ENCODE measurements at regions of chr6 and their contacts with region 1.

Region 1: DNA sequence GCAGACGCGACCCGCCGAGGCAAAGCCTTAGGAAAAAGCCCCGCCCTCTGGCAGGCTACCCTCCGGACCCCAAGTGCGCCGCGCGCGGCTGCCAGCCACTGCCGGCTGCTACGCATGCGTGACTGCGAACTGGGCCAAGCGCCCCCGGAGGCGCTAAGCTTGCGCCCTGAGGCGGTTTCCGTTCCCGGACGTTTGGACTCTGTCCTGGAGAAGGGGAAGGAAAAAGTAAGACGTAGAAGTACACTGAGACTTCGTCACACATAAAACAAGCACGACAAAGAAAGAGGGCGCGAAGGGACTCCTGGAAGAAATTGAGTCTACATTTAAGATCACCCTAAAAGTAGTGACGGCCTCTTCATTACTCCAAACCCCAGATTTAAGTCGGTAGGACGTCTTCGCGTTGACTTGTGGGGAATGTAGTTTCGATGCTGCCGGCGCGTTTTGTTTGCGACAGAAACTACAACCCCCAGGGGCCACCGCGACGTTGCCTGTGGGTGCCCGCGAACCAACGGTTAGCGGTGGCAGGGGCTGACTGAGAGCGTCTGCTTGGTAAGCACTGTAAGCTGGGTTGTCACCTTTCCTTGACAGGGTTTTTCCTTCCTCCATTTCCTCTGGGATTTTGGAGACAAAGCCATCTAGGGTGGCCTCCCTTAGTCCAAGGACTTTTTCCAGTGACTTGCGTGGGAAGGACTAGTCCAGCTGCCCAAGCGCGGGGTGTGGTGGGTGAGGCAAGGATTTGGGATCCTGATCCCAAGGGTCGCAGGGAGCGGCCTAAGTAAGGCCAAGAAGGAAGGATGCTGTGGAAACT is at the start of gene CEP57L1:
- DNase-seq: peak; percentile 88 to 96 (median 94)
- ATAC-seq: peak; percentile 81
- H3K4me3 ChIP-seq: peak within 1 kb of the TSS; percentile 96
- H3K4me3 Mint-ChIP-seq: peak within 1 kb of the TSS; percentile 92 to 98 (median 96)
- H3K27ac ChIP-seq: peak within 1 kb of the TSS; percentile 94
- H3K27ac Mint-ChIP-seq: peak within 1 kb of the TSS; percentile 98 to 99 (median 99)
- H3K4me1 ChIP-seq: peaks cover 21 to 29% of the 10 kb centered on the region in 2 donors
- H3K4me1 Mint-ChIP-seq: peaks cover 26 to 64% (median 54%) of the 10 kb centered on the region in 7 donors
- H3K27me3 ChIP-seq: no peaks in the 10 kb centered on the region
- H3K27me3 Mint-ChIP-seq: no peaks in the 10 kb centered on the region
- total RNA-seq, gene CEP57L1: 3.1 to 17.2 (median 6.5) TPM

Region 2: DNA sequence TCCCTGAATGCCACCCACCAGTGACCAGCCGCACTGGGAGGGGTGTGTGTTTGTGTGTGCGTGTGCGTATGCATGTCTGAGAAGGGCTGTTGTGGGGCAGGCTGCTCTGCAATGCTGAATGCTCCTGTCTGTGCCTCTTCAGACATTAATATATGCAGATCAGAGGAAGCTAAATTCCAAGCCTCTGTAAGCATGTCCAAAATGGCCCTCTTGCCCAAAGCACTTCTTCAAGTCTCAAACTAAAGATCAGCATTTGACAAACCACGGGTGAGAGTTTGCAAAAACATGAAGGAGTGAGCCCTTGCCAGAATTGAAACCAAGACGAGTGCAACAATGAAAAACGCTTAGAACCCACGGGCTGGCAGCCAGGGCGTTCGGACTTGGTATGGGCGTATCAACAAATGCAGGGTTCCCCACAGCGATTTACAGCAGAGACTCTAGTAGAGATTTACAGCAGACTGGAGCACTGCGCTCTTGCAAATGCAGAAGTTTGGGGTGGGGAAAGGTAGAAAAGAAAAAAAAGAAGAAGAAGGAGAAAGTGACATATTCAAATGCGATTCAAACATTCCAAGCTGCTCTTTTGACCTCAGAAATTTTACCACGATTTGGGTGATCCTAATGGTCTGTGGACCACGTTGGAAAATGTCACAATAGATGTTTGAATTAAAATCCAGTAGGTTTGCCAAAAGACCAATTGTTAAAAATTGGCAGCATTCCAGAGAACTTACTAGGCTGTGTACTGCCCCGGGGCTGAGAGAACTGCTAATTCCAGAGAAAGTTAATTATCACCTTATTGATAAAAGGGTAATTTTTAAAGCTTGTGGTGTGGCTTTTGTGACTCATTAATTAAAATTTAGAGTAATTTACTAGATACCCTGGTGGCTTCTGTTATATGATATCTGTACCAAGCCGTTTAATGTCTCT is 1274.6 kb before region 1 on chr6:
- CTCF ChIA-PET with region 1: no interaction called
- POLR2A ChIA-PET with region 1: no interaction called
- intact Hi-C with region 1: loop called in 1 of 2 experiments (anchors 5 kb)
- DNase-seq: peak in 8 of 9 donors; percentile 13 to 62 (median 51)
- ATAC-seq: peak; percentile 9
- H3K4me3 ChIP-seq: peak overlapping the region; percentile 76
- H3K4me3 Mint-ChIP-seq: peak overlapping the region; percentile 85 to 98 (median 95)
- H3K27ac ChIP-seq: peak overlapping the region; percentile 95
- H3K27ac Mint-ChIP-seq: peak overlapping the region; percentile 96 to 100 (median 99)
- H3K4me1 ChIP-seq: peaks cover 57 to 59% of the 10 kb centered on the region in 2 donors
- H3K4me1 Mint-ChIP-seq: peaks cover 45 to 83% (median 81%) of the 10 kb centered on the region in 7 donors
- H3K27me3 ChIP-seq: no peaks in the 10 kb centered on the region
- H3K27me3 Mint-ChIP-seq: no peaks in the 10 kb centered on the region

Region 3: DNA sequence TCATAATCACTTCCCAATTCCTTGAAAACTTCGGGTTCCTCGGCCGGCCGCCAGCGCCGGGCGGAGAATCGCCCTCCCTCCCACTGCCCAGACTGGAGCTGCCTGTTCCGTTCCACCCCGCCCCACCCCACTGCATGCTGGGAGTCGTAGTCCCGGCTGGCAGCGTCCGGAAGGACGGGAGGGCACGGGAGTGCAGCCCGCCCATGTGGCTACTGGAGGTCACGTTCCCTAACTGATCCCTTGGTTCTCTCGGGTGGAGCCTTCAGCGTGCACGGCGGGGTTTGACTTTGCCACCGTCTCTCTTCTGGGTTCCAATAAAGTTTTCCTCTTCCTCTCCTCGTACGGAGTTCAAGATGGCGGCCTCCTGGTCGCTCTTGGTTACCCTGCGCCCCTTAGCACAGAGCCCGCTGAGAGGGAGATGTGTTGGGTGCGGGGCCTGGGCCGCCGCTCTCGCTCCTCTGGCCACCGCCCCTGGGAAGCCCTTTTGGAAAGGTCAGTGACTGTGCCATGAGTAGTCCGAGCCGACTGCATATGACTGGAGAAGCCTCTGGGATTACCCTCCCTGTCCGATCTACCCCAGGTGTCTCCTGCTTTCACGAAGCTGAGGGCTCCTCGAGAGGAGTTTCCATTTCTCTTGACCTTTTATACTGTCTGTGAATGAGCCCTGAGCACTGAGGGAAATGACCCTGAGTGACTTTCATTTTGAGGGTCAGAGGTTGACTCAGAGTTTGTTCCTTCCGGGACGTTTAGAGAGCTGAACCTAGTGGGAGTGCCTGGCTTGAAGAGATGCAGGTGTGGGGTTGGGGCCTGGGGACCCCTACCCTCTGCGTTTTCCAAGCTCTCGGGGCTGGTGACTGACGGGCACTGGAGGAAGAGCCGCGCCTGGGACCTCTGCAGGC is 800.3 kb before region 1 on chr6 and contains the start of gene AFG1L:
- CTCF ChIA-PET with region 1: no interaction called
- POLR2A ChIA-PET with region 1: interaction called, 3 read pairs
- intact Hi-C with region 1: loop called in 1 of 2 experiments (anchors 1 kb)
- DNase-seq: peak; percentile 81 to 90 (median 88)
- ATAC-seq: peak; percentile 96
- H3K4me3 ChIP-seq: peak within 1 kb of the TSS; percentile 99
- H3K4me3 Mint-ChIP-seq: peak within 1 kb of the TSS; percentile 93 to 99 (median 98)
- H3K27ac ChIP-seq: peak within 1 kb of the TSS; percentile 88
- H3K27ac Mint-ChIP-seq: peak within 1 kb of the TSS; percentile 95 to 100 (median 99)
- H3K4me1 ChIP-seq: peaks cover 10 to 13% of the 10 kb centered on the region in 2 donors
- H3K4me1 Mint-ChIP-seq: peaks cover 11 to 37% (median 26%) of the 10 kb centered on the region in 7 donors
- H3K27me3 ChIP-seq: no peaks in the 10 kb centered on the region
- H3K27me3 Mint-ChIP-seq: peaks cover 0 to 3% (median 0%) of the 10 kb centered on the region in 5 donors
- total RNA-seq, gene AFG1L: 4.1 to 9.2 (median 7.2) TPM

Region 4: DNA sequence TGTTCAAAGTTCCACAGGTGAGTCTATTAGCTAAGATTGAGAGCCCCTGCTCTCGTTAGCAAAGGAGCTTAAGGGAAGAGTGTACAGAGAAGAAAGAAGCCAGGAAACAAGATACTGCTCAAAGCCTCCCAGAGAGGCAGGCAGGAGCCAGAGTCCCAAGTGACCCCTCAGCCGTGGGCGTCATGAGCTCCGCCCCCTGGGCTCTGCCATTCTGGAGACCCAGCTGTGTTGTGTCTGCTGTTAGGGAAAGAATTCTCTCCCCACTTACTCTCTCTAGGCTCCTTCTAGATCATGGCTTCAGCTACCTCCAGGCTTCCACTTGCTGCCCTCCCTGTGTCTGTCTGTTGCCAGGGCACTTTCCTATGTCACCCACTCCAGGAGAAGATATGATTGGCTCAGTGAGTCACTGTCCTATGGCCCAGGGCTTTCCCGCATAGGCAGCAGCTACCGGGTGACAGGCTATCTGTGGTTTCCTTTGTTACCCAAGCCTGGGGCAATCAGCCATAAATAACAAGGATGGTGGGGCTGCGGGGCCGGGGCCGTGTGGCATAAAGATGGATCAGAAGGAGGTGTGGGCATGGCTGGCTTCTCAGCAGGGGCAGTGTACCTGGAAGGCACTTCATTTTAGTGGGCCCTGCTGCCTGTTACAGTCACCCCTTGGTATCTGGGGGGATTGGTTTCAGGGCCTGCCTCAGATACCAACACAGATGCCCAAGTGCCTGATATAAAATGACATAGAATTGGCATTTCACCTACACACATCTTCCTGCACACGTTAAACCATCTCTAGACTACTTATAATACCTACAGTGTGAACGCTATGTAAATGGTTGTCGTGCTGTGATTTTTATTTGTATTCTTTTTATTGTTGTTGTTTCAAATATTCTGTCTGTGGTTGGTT is 128.1 kb before region 1 on chr6:
- CTCF ChIA-PET with region 1: no interaction called
- POLR2A ChIA-PET with region 1: no interaction called
- intact Hi-C with region 1: no loop called
- DNase-seq: no peak
- ATAC-seq: peak; percentile 93
- H3K4me3 ChIP-seq: no peak overlapping the region
- H3K4me3 Mint-ChIP-seq: no peak overlapping the region
- H3K27ac ChIP-seq: no peak overlapping the region
- H3K27ac Mint-ChIP-seq: peak overlapping the region in 4 of 9 donors; percentile 38 to 76 (median 60)
- H3K4me1 ChIP-seq: no peaks in the 10 kb centered on the region
- H3K4me1 Mint-ChIP-seq: peaks cover 0 to 21% (median 6%) of the 10 kb centered on the region in 7 donors
- H3K27me3 ChIP-seq: no peaks in the 10 kb centered on the region
- H3K27me3 Mint-ChIP-seq: peaks cover 0 to 2% (median 0%) of the 10 kb centered on the region in 5 donors

Region 5: GRCh38 chr6:109009236-109009961 is 85.8 kb before region 1 on chr6:
- CTCF ChIA-PET with region 1: no interaction called
- POLR2A ChIA-PET with region 1: interaction called, 16 read pairs
- intact Hi-C with region 1: loop called (anchors 1 kb)
- DNase-seq: peak; percentile 85 to 91 (median 90)
- ATAC-seq: peak; percentile 98
- H3K4me3 ChIP-seq: peak overlapping the region; percentile 84
- H3K4me3 Mint-ChIP-seq: peak overlapping the region; percentile 91 to 99 (median 96)
- H3K27ac ChIP-seq: peak overlapping the region; percentile 99
- H3K27ac Mint-ChIP-seq: peak overlapping the region; percentile 94 to 100 (median 98)
- H3K4me1 ChIP-seq: peaks cover 22 to 40% of the 10 kb centered on the region in 2 donors
- H3K4me1 Mint-ChIP-seq: peaks cover 26 to 81% (median 72%) of the 10 kb centered on the region in 7 donors
- H3K27me3 ChIP-seq: no peaks in the 10 kb centered on the region
- H3K27me3 Mint-ChIP-seq: peaks cover 0 to 3% (median 0%) of the 10 kb centered on the region in 5 donors

Region 6: DNA sequence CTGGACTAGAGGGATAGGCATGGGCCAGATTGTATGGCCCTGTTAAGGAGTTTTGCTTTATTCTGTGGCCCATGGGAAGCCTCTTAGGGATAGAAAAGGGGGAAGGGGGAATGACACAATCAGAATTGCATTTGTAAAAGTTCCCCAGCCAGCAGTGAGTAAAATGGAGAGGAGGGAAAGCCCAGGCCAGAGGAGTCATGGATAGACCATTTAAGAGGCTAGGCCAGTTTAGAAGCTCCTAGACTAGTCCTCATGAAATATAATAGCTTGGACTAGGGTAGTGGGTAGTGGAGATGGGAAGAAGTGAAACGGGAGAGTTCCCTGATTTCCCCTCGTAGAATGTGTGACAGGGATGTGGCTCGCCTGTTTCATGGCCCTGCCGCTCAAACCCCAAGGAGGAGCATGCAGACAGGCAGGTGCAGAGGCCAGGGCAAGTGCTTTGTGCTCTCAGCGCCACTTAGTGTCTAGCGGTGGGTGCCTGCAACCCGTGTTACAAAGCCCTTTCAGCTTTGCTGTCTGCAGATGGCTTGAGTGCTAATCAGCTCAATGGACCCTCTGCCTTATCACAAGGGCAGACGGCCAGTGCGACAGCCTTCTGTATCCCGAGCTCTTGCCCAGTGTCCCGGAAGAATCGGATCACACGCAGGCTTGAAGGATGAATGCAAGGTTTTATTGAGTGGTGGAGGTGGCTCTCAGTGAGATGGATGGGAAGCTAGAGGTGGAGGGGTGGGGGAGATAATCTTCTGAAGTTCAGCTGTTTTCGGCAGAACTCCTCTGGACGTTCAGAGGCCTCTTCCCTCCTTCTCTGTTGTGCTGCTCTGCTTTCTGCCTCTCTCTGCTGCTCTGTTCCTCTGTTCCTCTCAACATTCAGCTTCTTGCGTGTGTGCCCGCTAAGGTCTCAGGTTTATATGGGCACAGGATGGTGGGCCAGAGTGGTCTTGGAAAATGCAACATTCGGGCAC is 141.2 kb after region 1 on chr6:
- CTCF ChIA-PET with region 1: no interaction called
- POLR2A ChIA-PET with region 1: no interaction called
- intact Hi-C with region 1: loop called in 1 of 2 experiments (anchors 5 kb)
- DNase-seq: peak in 3 of 9 donors; percentile 12 to 34 (median 32)
- ATAC-seq: peak; percentile 56
- H3K4me3 ChIP-seq: no peak overlapping the region
- H3K4me3 Mint-ChIP-seq: peak overlapping the region; percentile 0 to 73 (median 26)
- H3K27ac ChIP-seq: no peak overlapping the region
- H3K27ac Mint-ChIP-seq: peak overlapping the region in 8 of 9 donors; percentile 2 to 90 (median 42)
- H3K4me1 ChIP-seq: no peaks in the 10 kb centered on the region
- H3K4me1 Mint-ChIP-seq: peaks cover 6 to 25% (median 18%) of the 10 kb centered on the region in 7 donors
- H3K27me3 ChIP-seq: no peaks in the 10 kb centered on the region
- H3K27me3 Mint-ChIP-seq: peaks cover 0 to 3% (median 0%) of the 10 kb centered on the region in 5 donors

Region 7: GRCh38 chr6:109482905-109483735 is 387.9 kb after region 1 on chr6 and contains the start of gene ZBTB24:
- CTCF ChIA-PET with region 1: no interaction called
- POLR2A ChIA-PET with region 1: interaction called, 3 read pairs
- intact Hi-C with region 1: loop called (anchors 1 kb)
- DNase-seq: peak; percentile 86 to 92 (median 89)
- ATAC-seq: peak; percentile 94
- H3K4me3 ChIP-seq: peak within 1 kb of the TSS; percentile 79
- H3K4me3 Mint-ChIP-seq: peak within 1 kb of the TSS; percentile 92 to 99 (median 97)
- H3K27ac ChIP-seq: peak within 1 kb of the TSS; percentile 84
- H3K27ac Mint-ChIP-seq: peak within 1 kb of the TSS; percentile 42 to 95 (median 91)
- H3K4me1 ChIP-seq: peaks cover 38 to 39% of the 10 kb centered on the region in 2 donors
- H3K4me1 Mint-ChIP-seq: peaks cover 38 to 55% (median 51%) of the 10 kb centered on the region in 7 donors
- H3K27me3 ChIP-seq: no peaks in the 10 kb centered on the region
- H3K27me3 Mint-ChIP-seq: peaks cover 0 to 7% (median 0%) of the 10 kb centered on the region in 5 donors
- total RNA-seq, gene ZBTB24: 10.2 to 26.6 (median 23.4) TPM

Region 8: DNA sequence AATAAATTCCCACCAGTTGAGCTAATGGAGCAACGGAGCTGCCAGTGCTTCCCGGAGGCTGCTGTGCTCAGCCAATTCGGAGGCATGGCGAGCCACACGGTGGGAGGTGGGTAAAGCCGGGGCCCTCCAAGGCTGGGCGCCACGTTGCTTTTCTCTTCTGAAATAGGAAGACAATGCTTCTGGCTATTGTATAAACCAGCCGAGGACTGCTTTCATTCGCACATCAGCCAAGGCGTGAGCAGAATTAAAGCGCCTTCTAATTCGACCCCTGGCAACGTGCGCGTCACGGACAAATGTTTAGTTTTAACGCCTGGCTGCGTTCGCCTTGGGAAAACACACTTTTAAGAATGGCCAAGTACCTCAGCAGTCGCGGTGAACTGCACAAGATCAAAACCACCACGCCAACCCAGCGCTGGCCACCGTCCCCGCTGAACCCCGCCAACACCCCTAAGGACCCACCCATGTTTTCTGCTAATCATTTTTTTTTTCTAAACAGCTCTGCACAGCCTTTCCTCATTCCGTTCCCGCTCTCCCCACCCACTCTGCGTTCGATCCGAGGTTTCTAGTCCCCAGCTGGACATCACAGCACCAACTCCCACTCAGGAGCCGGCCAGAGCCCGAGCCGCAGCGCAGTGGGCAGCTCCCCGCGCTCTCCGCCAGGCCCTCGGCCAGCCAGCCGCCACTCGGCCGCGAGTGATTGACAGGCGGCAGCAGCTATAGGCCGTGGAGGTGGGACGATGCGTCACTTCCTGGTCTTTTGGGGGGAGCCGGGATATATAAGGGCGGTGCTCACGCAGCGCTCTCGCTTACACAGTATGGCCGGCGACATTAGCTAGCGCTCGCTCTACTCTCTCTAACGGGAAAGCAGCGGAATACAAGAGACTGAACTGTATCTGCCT is 1779.0 kb after region 1 on chr6 and contains the start of gene AMD1:
- CTCF ChIA-PET with region 1: no interaction called
- POLR2A ChIA-PET with region 1: interaction called, 3 read pairs
- intact Hi-C with region 1: loop called in 1 of 2 experiments (anchors 1 kb)
- DNase-seq: peak; percentile 87 to 97 (median 96)
- ATAC-seq: peak; percentile 85
- H3K4me3 ChIP-seq: peak within 1 kb of the TSS; percentile 99
- H3K4me3 Mint-ChIP-seq: peak within 1 kb of the TSS in 9 of 10 donors; percentile 94 to 99 (median 99)
- H3K27ac ChIP-seq: peak within 1 kb of the TSS; percentile 73
- H3K27ac Mint-ChIP-seq: peak within 1 kb of the TSS in 8 of 9 donors; percentile 96 to 100 (median 99)
- H3K4me1 ChIP-seq: peaks cover 26 to 28% of the 10 kb centered on the region in 2 donors
- H3K4me1 Mint-ChIP-seq: peaks cover 19 to 28% (median 27%) of the 10 kb centered on the region in 7 donors
- H3K27me3 ChIP-seq: no peaks in the 10 kb centered on the region
- H3K27me3 Mint-ChIP-seq: no peaks in the 10 kb centered on the region
- total RNA-seq, gene AMD1: 61.1 to 105 (median 73.8) TPM

Measured in naive thymus-derived CD4-positive, alpha-beta T cell (primary cell).